Activated CD4-positive, alpha-beta T cell treated with anti-CD3 and anti-CD28 coated beads for 36 hours (primary cell): ENCODE measurements at regions of chr5 and their contacts with region 1.

Region 1: DNA sequence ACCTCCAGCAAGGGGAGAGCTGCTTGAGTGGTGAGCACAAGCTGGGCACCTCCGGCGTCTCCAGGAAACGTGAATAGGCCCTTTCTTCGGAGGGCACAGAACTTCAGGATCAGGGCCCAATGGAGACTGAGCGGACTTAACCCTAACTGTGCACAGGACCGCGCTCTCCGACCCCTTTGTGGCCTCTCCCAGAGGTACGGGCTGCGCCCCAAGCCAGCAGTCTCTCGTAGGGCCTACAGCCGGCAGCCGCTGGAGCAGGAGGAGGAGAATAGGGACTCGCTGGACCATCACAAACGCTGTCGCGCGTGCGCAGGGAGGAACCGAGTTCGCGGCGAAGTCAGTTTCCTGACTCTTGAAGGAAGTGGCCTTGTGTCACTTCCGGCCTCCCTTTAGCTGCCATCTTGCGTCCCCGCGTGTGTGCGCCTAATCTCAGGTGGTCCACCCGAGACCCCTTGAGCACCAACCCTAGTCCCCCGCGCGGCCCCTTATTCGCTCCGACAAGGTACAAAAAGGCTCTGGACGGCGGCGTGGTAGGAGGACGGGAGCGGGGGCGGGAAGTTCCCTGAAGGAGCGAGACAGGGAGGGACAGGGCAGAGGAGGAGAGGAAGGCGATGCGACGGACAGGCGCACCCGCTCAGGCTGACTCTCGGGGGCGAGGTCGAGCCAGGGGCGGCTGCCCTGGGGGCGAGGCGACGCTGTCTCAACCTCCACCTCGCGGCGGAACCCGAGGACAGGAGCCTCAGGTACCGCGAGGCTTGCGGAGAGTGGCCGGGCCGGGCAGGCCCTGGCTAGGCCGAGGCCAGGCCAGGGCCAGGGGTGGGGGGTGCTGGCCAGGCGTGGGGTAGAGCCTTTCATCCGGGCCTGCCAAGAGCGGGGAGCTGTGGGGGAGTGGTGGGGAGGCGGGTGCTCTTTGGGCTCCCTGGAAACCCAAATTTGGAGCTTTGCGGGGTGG is at the start of gene BTF3:
- DNase-seq: peak; percentile 96
- ATAC-seq: peak; percentile 95
- H3K4me3 Mint-ChIP-seq: peak within 1 kb of the TSS; percentile 87
- H3K27ac Mint-ChIP-seq: peak within 1 kb of the TSS; percentile 98
- H3K4me1 Mint-ChIP-seq: peaks cover 35% of the 10 kb centered on the region
- H3K27me3 Mint-ChIP-seq: peaks cover 2% of the 10 kb centered on the region
- total RNA-seq, gene BTF3: 1,030 to 1,213 TPM

Region 2: DNA sequence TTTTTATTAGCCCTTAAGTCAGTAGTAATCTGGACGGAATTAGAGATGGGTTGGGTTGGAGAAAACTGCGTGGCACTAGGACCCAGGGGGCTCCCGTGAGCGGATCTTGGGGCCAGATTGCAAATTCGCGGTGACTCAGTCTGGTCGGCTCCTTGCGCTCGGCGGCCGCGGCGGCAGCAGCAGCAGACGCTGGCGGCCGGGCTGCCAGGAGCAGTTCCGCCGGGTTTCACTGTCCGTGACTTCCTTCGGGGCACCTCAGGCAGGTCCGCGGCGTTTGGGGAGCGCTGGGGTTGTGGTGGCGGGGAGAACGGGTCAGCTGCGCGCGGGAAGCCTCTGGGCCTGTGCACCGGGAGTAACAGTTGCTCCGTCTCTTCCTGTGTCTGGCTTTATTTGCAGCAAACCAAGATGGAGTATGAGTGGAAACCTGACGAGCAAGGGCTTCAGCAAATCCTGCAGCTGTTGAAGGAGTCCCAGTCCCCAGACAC is 650.3 kb before region 1 on chr5:
- CTCF ChIA-PET with region 1: no interaction called
- POLR2A ChIA-PET with region 1: no interaction called
- intact Hi-C with region 1: loop called in 1 of 2 experiments (anchors 1 kb)
- DNase-seq: peak; percentile 92
- ATAC-seq: peak; percentile 88
- H3K4me3 Mint-ChIP-seq: peak overlapping the region; percentile 92
- H3K27ac Mint-ChIP-seq: peak overlapping the region; percentile 97
- H3K4me1 Mint-ChIP-seq: peaks cover 45% of the 10 kb centered on the region
- H3K27me3 Mint-ChIP-seq: no peaks in the 10 kb centered on the region

Region 3: GRCh38 chr5:74326571-74327338 is 828.4 kb after region 1 on chr5:
- CTCF ChIA-PET with region 1: no interaction called
- POLR2A ChIA-PET with region 1: no interaction called
- intact Hi-C with region 1: no loop called
- DNase-seq: peak; percentile 86
- ATAC-seq: peak; percentile 91
- H3K4me3 Mint-ChIP-seq: no peak overlapping the region
- H3K27ac Mint-ChIP-seq: no peak overlapping the region
- H3K4me1 Mint-ChIP-seq: peaks cover 22% of the 10 kb centered on the region
- H3K27me3 Mint-ChIP-seq: peaks cover 25% of the 10 kb centered on the region